MCF 10A (cell line): ENCODE measurements at regions of chr3 and their contacts with region 1.

Region 1: GRCh38 chr3:48188266-48189201 is at the start of gene CDC25A:
- DNase-seq: peak; percentile 99
- H3K4me3 Mint-ChIP-seq: peak within 1 kb of the TSS; percentile 79
- H3K27ac Mint-ChIP-seq: peak within 1 kb of the TSS; percentile 13
- H3K4me1 Mint-ChIP-seq: peaks cover 11% of the 10 kb centered on the region
- H3K27me3 Mint-ChIP-seq: no peaks in the 10 kb centered on the region
- CTCF ChIP-seq: no peak
- total RNA-seq, gene CDC25A: 7.3 and 8.6 TPM in 2 replicates

Region 2: DNA sequence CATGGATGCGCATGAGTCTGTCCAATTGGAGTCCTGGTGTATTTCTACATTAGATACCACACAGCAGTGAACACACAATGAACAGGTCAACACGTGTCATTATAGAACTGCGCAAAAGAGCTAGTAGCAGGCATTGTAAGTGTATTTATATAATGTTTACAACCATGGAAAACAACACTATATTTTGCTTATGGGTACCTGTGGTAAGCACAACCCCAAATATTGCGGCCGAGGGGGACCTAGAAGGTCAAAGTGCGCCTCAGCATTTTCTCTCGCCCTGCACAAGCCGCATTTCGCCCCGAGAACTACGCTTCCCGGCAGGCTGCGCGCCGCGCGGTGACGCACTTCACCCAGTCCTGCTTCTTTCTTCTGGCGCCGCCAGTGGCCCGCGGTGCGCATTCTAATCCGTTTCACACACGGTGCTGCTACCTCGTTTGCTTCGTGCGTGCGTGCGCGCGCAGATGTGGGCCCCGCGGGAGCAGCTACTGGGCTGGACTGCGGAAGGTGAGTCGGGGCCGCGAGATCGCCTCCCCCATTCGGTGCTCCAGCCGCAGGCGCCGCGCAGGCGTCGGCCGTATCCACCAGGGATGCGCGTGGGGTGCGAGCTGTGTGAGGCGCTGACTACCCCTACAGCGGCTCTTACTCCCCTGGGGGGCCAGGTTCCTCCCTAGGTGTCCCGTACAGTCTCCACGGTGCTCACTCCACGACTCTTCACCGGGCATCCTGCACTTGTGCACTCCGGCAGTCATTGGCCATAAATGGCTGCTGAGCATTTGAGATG is 52.4 kb after region 1 on chr3 and contains the start of gene ZNF589:
- CTCF ChIA-PET with region 1: interaction called, 7 read pairs
- POLR2A ChIA-PET with region 1: interaction called, 10 read pairs
- intact Hi-C with region 1: no loop called
- DNase-seq: peak; percentile 97
- H3K4me3 Mint-ChIP-seq: peak within 1 kb of the TSS; percentile 83
- H3K27ac Mint-ChIP-seq: peak within 1 kb of the TSS; percentile 81
- H3K4me1 Mint-ChIP-seq: no peaks in the 10 kb centered on the region
- H3K27me3 Mint-ChIP-seq: no peaks in the 10 kb centered on the region
- CTCF ChIP-seq: no peak
- total RNA-seq, gene ZNF589: 5.6 and 5.7 TPM in 2 replicates

Region 3: GRCh38 chr3:48299746-48300712 is 111.5 kb after region 1 on chr3:
- CTCF ChIA-PET with region 1: no interaction called
- POLR2A ChIA-PET with region 1: no interaction called
- intact Hi-C with region 1: no loop called
- DNase-seq: peak; percentile 4
- H3K4me3 Mint-ChIP-seq: peak overlapping the region; percentile 97
- H3K27ac Mint-ChIP-seq: peak overlapping the region; percentile 99
- H3K4me1 Mint-ChIP-seq: peaks cover 24% of the 10 kb centered on the region
- H3K27me3 Mint-ChIP-seq: no peaks in the 10 kb centered on the region
- CTCF ChIP-seq: no peak